Activated CD4-positive, alpha-beta T cell treated with anti-CD3 and anti-CD28 coated beads, Interleukin-2, amount 10 ng/mL, durations not matched to agents 24 days and 14 days (primary cell): ENCODE measurements at regions of chr3 and their contacts with region 1.

Region 1: DNA sequence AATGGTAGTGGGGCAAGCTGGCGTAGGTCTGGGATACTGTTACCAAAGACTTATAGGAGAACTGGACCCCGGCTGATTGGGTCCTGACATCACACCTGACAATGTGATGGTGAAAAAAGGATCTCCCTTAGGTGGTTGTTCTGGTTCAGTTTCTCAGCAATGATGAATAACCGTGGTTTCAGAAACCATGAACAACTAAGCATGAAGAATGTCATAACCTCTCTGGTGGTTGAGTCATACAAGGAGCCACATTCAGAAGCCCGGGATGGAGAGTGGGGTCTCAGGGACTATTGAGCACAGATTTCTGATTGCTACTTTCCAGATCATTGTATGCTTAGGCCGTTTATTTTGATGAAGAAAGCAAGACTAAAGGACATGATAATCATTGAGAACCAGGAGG is 17.4 kb downstream of the GPR160 start:
- DNase-seq: no peak
- H3K4me3 Mint-ChIP-seq: no peak overlapping the region
- H3K27ac Mint-ChIP-seq: no peak overlapping the region
- H3K4me1 Mint-ChIP-seq: peaks cover 29% of the 10 kb centered on the region
- H3K27me3 Mint-ChIP-seq: no peaks in the 10 kb centered on the region

Region 2: GRCh38 chr3:169772897-169773828 is 282.0 kb before region 1 on chr3 and contains the start of gene MYNN:
- intact Hi-C with region 1: loop called (anchors 5 kb)
- DNase-seq: peak; percentile 98
- H3K4me3 Mint-ChIP-seq: peak within 1 kb of the TSS; percentile 99
- H3K27ac Mint-ChIP-seq: peak within 1 kb of the TSS; percentile 100
- H3K4me1 Mint-ChIP-seq: peaks cover 31% of the 10 kb centered on the region
- H3K27me3 Mint-ChIP-seq: no peaks in the 10 kb centered on the region
- total RNA-seq, gene MYNN: 15.9 and 17.2 TPM in 2 replicates

Region 3: DNA sequence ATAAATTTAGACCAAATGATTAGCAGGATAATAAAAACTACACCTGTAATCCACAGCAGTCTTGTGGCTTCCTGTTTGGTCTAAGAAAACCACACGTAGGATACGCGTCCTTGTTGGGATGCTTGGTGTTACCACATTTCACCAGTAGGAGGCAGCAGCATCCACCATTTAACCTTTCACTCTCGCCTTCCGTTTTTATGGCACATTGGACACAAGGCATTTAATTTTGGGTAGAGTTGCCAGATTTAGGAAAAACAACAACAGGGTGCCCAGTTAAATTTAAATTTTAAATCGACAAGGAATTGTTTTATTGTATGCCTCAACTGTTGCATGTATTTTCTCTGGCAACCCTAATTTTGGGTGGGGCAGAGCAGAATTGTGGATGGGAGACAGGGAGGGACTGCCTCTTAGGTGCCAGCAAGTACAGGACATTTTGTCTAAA is 191.7 kb before region 1 on chr3:
- intact Hi-C with region 1: loop called (anchors 1 kb)
- DNase-seq: peak; percentile 90
- H3K4me3 Mint-ChIP-seq: no peak overlapping the region
- H3K27ac Mint-ChIP-seq: no peak overlapping the region
- H3K4me1 Mint-ChIP-seq: peaks cover 16% of the 10 kb centered on the region
- H3K27me3 Mint-ChIP-seq: peaks cover 19% of the 10 kb centered on the region

Region 4: GRCh38 chr3:169998568-169999131 is 56.6 kb before region 1 on chr3:
- intact Hi-C with region 1: loop called (anchors 1 kb)
- DNase-seq: no peak
- H3K4me3 Mint-ChIP-seq: no peak overlapping the region
- H3K27ac Mint-ChIP-seq: peak overlapping the region; percentile 25
- H3K4me1 Mint-ChIP-seq: peaks cover 21% of the 10 kb centered on the region
- H3K27me3 Mint-ChIP-seq: no peaks in the 10 kb centered on the region

Region 5: DNA sequence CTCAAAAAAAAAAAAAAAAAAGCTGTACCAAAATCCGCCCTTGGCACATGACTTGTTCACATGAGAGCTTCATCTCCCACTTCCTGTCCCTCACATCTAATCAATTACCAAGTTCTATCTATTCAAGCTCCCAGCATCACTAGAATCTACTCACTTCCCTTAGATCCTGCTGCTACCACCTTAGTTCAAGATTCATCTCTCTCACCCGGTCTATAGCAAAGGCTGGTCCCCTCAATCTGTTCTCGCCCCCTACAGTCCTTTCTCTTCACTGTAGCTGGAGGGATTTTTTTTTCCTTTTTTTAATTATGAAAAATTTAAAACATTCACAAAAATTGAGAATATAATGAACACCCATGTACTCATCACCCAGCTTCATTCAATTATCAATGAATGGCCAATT is 34.1 kb before region 1 on chr3:
- intact Hi-C with region 1: no loop called
- DNase-seq: no peak
- H3K4me3 Mint-ChIP-seq: no peak overlapping the region
- H3K27ac Mint-ChIP-seq: no peak overlapping the region
- H3K4me1 Mint-ChIP-seq: peaks cover 7% of the 10 kb centered on the region
- H3K27me3 Mint-ChIP-seq: peaks cover 20% of the 10 kb centered on the region

Region 6: DNA sequence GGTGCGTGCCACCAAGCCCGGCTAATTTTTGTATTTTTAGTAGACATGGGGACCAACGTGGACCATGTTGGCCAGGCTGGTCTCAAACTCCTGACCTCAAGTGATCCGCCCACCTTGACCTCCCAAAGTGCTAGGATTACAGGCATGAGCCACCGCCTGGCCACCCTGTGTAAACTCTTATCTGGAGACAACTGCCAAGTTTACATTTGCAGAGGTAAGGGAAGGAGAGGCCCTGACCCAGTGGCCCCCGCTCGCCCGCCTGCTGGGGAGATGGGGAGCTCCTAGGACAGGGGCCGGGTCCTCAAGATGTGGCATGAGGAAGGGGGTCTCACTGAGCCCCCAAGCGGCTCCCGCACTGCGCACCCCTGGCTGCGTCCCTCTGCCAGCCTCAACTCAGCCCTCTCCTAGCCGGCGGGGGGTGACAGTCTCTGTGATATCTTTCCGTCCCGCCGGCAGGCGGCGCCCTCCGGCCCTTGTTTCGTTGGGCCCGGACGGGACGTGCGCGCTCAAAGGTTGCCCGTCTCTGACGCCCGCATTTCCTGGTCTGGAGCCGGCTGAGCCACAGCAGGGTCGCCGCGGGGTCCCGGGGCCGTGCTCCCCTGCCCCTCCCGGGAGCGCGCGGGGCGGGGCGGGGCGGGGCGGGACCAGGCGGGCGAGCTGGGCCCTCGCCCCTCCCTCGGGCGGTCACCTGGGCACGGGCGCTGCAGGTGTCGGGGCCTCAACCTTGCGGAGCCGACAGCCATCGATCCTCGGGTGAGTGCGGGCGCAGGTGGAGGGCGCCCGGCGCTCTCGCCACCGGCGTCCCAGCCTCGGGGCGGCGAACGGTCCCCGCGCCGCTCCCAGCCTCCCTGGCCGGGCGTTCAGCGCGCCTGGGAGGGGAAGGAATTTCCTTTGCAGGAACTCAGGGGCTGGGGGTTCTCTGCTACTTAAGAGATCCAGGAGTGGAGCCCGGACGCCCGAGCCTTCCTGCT is 17.5 kb before region 1 on chr3 and contains the start of gene GPR160:
- intact Hi-C with region 1: loop called (anchors 2 kb)
- DNase-seq: peak; percentile 95
- H3K4me3 Mint-ChIP-seq: peak within 1 kb of the TSS; percentile 87
- H3K27ac Mint-ChIP-seq: no peak within 1 kb of the TSS
- H3K4me1 Mint-ChIP-seq: peaks cover 16% of the 10 kb centered on the region
- H3K27me3 Mint-ChIP-seq: peaks cover 6% of the 10 kb centered on the region
- total RNA-seq, gene GPR160: 3.4 and 3.6 TPM in 2 replicates

Region 7: GRCh38 chr3:170117134-170117533 is 61.9 kb after region 1 on chr3:
- intact Hi-C with region 1: no loop called
- DNase-seq: no peak
- H3K4me3 Mint-ChIP-seq: no peak overlapping the region
- H3K27ac Mint-ChIP-seq: no peak overlapping the region
- H3K4me1 Mint-ChIP-seq: peaks cover 2% of the 10 kb centered on the region
- H3K27me3 Mint-ChIP-seq: no peaks in the 10 kb centered on the region

Region 8: GRCh38 chr3:170257145-170257544 is 201.9 kb after region 1 on chr3:
- intact Hi-C with region 1: loop called (anchors 5 kb)
- DNase-seq: no peak
- H3K4me3 Mint-ChIP-seq: peak overlapping the region; percentile 24
- H3K27ac Mint-ChIP-seq: peak overlapping the region; percentile 83
- H3K4me1 Mint-ChIP-seq: peaks cover 40% of the 10 kb centered on the region
- H3K27me3 Mint-ChIP-seq: no peaks in the 10 kb centered on the region